IMR-90 (cell line): ENCODE measurements at regions of chr11 and their contacts with region 1.

Region 1: DNA sequence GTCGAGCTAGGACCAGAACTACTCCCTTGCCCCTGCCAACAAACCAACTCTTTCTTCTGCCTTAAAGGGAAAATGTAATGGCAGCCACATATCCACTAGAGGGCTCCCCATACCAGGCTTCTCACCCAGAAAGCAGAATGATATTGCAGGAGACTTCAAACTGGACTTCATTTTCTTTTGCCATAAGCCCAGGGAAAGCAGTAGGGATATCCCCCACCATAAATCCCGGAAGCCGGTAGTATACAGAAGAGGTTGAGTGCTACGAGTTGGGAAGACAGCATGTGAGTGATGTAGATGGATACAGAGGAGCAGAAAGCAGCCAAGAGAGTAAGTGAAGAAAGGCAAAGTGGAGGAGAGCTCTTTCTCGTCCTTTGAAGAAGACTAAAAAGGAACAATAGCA is 12.1 kb downstream of the PLAAT5 start:
- DNase-seq: peak; percentile 75
- ATAC-seq: peak; percentile 97
- H3K4me3 ChIP-seq: no peak overlapping the region
- H3K27ac ChIP-seq: no peak overlapping the region
- H3K4me1 ChIP-seq: no peaks in the 10 kb centered on the region
- H3K27me3 ChIP-seq: peaks cover 3% of the 10 kb centered on the region
- CTCF ChIP-seq: peak; percentile 95
- POLR2A ChIP-seq: peak; percentile 58; the same call in 1 of the 2 replicates
- RAD21 ChIP-seq: peak; percentile 98

Region 2: GRCh38 chr11:63369165-63369970 is 109.5 kb before region 1 on chr11 and contains the start of gene SLC22A9:
- CTCF ChIA-PET with region 1: no interaction called
- POLR2A ChIA-PET with region 1: no interaction called
- dilution Hi-C with region 1: no loop called
- in situ Hi-C with region 1: no loop called
- intact Hi-C with region 1: no loop called
- DNase-seq: no peak
- ATAC-seq: no peak
- H3K4me3 ChIP-seq: no peak within 1 kb of the TSS
- H3K27ac ChIP-seq: no peak within 1 kb of the TSS
- H3K4me1 ChIP-seq: no peaks in the 10 kb centered on the region
- H3K27me3 ChIP-seq: no peaks in the 10 kb centered on the region
- CTCF ChIP-seq: no peak
- POLR2A ChIP-seq: no peak
- RAD21 ChIP-seq: no peak
- total RNA-seq, gene SLC22A9: not detected in 2 replicates

Region 3: DNA sequence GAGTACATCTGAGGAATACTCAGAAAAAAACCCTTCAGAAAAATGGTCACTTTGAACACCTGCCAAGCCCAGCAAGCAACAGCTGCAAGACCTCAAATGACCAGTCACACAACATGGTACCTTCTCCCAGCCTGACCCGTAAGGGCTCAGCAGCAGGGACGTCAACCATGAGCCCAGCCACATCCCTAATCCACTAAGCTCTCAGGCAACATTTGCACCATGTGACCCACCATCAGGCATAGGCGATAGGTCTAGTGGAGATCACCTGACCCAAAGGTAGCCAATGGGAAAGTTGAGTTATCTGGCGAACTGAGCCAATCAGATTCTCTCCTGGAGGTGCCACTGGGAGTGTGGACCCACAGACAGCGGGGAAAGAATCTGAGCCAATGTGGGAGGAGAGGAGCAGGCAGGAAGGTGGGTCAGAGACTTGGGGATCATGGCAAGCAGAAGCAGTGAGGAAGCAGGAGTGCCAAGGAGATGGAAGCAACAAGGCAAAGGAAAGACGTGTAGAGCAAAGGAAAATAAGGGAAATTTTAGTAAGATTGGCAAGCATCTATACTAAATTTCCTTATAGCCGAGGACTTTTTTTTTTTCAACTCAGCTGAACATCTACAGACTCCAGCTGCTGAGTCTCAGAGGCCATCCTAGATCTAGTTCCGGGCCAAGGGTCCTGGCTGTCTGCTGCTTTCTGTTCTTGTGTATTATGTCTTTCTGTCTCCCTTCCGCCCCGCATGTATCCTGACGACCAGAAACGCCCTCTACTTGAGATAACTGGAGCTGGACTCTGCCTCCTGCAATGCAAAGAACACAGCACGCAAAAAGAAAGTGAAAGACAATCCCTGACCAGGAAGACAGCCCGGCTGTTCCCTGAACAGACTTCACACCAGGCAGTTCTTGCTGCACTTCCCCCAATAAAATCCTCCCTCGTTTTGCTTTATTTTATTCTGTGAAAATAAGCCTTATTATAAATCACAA is 95.3 kb after region 1 on chr11:
- CTCF ChIA-PET with region 1: no interaction called
- POLR2A ChIA-PET with region 1: no interaction called
- dilution Hi-C with region 1: no loop called
- in situ Hi-C with region 1: no loop called
- intact Hi-C with region 1: no loop called
- DNase-seq: peak; percentile 85
- ATAC-seq: peak; percentile 99
- H3K4me3 ChIP-seq: peak overlapping the region; percentile 21; the same call in 1 of the 2 replicates
- H3K27ac ChIP-seq: peak overlapping the region; percentile 45; the same call in 1 of the 2 replicates
- H3K4me1 ChIP-seq: peaks cover 8% of the 10 kb centered on the region
- H3K27me3 ChIP-seq: no peaks in the 10 kb centered on the region
- CTCF ChIP-seq: peak; percentile 19; the same call in 1 of the 2 replicates
- POLR2A ChIP-seq: no peak
- RAD21 ChIP-seq: no peak

Region 4: GRCh38 chr11:63614136-63614664 is 135.3 kb after region 1 on chr11 and contains the start of gene PLAAT3:
- CTCF ChIA-PET with region 1: no interaction called
- POLR2A ChIA-PET with region 1: no interaction called
- dilution Hi-C with region 1: no loop called
- in situ Hi-C with region 1: no loop called
- intact Hi-C with region 1: no loop called
- DNase-seq: no peak
- ATAC-seq: peak; percentile 90
- H3K4me3 ChIP-seq: peak within 1 kb of the TSS; percentile 61
- H3K27ac ChIP-seq: no peak within 1 kb of the TSS; the same call in 1 of the 2 replicates
- H3K4me1 ChIP-seq: peaks cover 4% of the 10 kb centered on the region; the same call in 1 of the 2 replicates
- H3K27me3 ChIP-seq: 0 out of 2 replicates have a peak, but pooled peaks cover 2% of the 10 kb centered on the region
- CTCF ChIP-seq: no peak
- POLR2A ChIP-seq: no peak
- RAD21 ChIP-seq: no peak
- total RNA-seq, gene PLAAT3: 3.2 and 3.3 TPM in 2 replicates

Region 5: DNA sequence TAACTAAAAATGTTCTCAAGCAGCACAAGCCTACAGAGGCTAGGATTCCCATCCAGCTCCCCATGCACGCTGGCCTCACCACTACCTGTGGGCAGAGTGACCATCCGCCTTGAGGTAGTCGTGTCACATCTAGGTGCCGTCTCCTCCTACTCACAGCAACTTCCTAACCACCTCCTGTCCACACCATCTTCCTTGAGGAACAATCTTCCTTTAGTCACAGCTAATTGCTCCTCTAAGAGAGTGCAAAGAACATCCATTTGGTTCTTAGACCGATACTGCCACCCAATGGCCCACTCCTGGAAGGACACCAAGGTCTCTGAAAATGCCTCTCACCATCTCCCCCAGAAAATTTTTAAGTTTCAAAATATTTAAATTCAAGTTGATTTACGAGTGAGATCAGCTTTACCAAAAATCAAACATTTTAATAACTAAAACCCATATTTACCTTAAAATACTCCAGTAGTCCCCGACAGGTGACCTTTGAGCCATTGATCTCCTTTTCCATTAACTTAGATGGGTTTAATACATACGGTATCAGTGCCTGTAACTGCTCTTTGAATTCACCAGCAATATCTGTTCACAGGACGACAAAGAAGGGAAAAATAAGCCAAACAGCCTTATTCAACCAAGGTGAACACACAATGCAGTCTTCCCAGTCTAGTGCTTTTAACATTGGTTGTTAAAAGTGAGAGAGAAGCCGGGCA is 157.0 kb after region 1 on chr11:
- CTCF ChIA-PET with region 1: interaction called, 15 read pairs
- POLR2A ChIA-PET with region 1: no interaction called
- dilution Hi-C with region 1: no loop called
- in situ Hi-C with region 1: loop called (anchors 5 kb)
- intact Hi-C with region 1: loop called (anchors 1 kb)
- DNase-seq: peak; percentile 63
- ATAC-seq: peak; percentile 94
- H3K4me3 ChIP-seq: no peak overlapping the region
- H3K27ac ChIP-seq: no peak overlapping the region
- H3K4me1 ChIP-seq: no peaks in the 10 kb centered on the region
- H3K27me3 ChIP-seq: no peaks in the 10 kb centered on the region
- CTCF ChIP-seq: peak; percentile 84
- POLR2A ChIP-seq: 0 out of 2 replicates have a peak, but pooled peaks have one; percentile 31
- RAD21 ChIP-seq: peak; percentile 91

Region 6: DNA sequence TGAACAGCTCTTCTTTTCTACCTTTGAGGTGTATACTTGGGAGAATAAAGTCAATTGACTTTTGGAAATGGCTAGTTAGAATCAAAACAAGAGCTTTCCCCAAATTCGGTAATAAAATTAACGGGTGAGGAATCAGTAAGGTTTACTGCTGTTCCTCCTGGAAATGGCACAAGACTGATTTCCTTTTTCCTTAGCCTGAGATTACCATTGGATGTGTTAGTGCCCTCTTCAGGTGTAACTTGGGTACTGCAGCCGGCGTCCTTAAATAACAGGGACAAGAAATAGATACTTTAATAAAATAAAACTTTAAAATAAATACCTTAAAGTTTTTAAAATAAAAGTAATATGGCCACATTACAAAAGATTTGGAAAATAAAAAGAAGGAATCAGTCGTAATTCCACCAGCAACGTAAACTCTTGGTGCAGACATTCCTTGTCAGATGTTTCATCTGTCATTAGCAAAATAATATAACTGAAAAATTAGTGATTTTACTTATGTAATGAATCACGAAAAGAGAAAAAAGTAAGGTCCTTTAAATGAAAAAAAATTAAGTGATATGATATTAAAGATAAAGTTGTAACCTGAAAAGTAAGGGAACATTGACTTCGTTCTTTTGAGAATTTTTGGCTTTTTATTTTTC is 259.9 kb after region 1 on chr11:
- CTCF ChIA-PET with region 1: interaction called, 3 read pairs
- POLR2A ChIA-PET with region 1: no interaction called
- dilution Hi-C with region 1: no loop called
- in situ Hi-C with region 1: loop called (anchors 5 kb)
- intact Hi-C with region 1: loop called (anchors 1 kb)
- DNase-seq: peak; percentile 84
- ATAC-seq: peak; percentile 97
- H3K4me3 ChIP-seq: no peak overlapping the region
- H3K27ac ChIP-seq: no peak overlapping the region
- H3K4me1 ChIP-seq: no peaks in the 10 kb centered on the region
- H3K27me3 ChIP-seq: no peaks in the 10 kb centered on the region
- CTCF ChIP-seq: peak; percentile 91
- POLR2A ChIP-seq: no peak
- RAD21 ChIP-seq: peak; percentile 79

Region 7: DNA sequence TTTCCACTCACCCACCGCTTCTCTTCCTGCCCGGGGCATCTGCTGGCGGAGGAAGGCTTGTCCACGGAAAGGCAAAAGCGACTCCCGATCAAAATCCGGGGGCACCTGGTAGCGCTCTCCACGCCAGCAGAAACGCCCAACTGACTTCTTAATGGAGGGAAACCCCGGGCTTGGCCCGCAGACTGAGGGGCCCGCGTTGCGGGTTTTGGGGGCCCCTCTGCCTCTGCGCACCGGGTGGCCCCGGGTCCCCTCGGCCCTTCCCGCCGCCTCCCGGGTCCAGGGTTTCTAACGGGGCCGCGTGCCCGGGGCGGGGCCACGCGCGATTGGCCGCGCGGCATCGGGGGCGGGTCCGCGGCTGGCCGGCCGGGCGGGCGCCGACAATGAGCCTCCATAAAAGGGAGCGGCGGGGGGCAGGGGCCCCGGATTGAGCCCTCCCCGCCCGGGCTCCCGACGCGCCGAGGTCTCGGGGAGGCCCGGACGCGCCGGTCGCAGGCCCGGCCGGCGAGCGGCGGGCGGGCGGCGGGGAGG is 334.2 kb after region 1 on chr11 and contains the start of gene SPINDOC:
- CTCF ChIA-PET with region 1: no interaction called
- POLR2A ChIA-PET with region 1: no interaction called
- dilution Hi-C with region 1: no loop called
- in situ Hi-C with region 1: no loop called
- intact Hi-C with region 1: loop called (anchors 5 kb)
- DNase-seq: peak; percentile 47
- ATAC-seq: peak; percentile 96
- H3K4me3 ChIP-seq: peak within 1 kb of the TSS; percentile 98
- H3K27ac ChIP-seq: peak within 1 kb of the TSS; percentile 95
- H3K4me1 ChIP-seq: peaks cover 4% of the 10 kb centered on the region
- H3K27me3 ChIP-seq: no peaks in the 10 kb centered on the region
- CTCF ChIP-seq: no peak
- POLR2A ChIP-seq: peak; percentile 83
- RAD21 ChIP-seq: no peak
- total RNA-seq, gene SPINDOC: 10.0 and 11.9 TPM in 2 replicates

Region 8: DNA sequence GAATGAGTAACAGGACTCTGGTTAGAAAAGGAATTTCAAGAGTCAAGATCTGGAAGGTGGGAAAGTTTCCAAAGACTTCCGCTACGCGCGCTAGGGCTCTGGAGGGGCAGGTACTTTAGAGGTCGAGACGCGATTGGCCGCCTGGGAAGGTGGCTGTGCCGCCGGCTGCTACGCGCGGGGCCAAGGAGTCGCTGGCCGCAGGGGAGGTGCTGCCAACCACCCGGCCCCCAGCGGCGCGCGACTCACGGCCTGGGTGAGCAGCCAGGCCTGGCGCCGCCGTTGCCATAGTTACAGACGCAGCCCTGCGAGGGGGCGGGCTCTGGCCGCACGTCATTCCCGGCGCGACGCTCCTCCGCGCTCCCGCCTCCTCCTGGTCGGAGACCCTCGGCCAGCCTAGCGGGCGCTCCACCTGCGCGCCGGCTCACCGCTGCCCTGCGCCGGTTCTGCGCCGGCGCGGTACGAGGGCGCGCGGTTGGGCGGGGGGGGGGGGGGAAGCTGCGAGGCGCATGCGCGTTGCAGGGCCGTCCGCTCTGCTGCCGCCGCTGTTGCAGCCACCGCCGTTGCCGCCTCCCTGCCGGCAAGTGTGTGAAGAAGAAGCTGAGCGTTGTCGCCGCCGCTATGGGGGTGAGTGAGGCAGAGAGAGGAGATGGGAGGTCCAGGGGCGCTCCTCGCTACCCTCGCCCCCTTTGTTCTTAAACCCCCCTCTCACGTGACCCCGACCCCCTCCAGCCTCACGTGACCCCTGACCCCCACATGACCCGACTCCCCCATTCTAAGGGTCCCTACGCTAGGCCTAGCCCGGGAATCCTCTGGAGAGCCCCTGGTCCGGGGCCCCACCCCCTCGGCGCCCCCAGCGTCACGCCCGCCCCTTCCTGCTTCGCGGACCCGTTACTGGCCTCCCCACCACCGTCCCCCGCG is 459.8 kb after region 1 on chr11 and contains the start of gene NAA40:
- CTCF ChIA-PET with region 1: no interaction called
- POLR2A ChIA-PET with region 1: no interaction called
- dilution Hi-C with region 1: no loop called
- in situ Hi-C with region 1: loop called (anchors 25 kb)
- intact Hi-C with region 1: no loop called
- DNase-seq: peak; percentile 94
- ATAC-seq: peak; percentile 98
- H3K4me3 ChIP-seq: peak within 1 kb of the TSS; percentile 90
- H3K27ac ChIP-seq: peak within 1 kb of the TSS; percentile 81
- H3K4me1 ChIP-seq: no peaks in the 10 kb centered on the region
- H3K27me3 ChIP-seq: no peaks in the 10 kb centered on the region
- CTCF ChIP-seq: 0 out of 2 replicates have a peak, but pooled peaks have one; percentile 5
- POLR2A ChIP-seq: no peak
- RAD21 ChIP-seq: no peak
- total RNA-seq, gene NAA40: 8.9 and 15.2 TPM in 2 replicates